ENCODE measurements at regions of chr2 and their contacts with region 1.

Region 1: GRCh38 chr2:188524519-188525113 is 232.9 kb downstream of the GULP1 start:
- DNase-seq: peak; percentile 67
- H3K4me3 Mint-ChIP-seq: no peak overlapping the region
- H3K27ac Mint-ChIP-seq: no peak overlapping the region
- H3K4me1 Mint-ChIP-seq: no peaks in the 10 kb centered on the region
- H3K27me3 Mint-ChIP-seq: peaks cover 2% of the 10 kb centered on the region

Region 2: GRCh38 chr2:188682838-188683237 is 158.2 kb after region 1 on chr2:
- intact Hi-C with region 1: no loop called
- DNase-seq: no peak
- H3K4me3 Mint-ChIP-seq: no peak overlapping the region
- H3K27ac Mint-ChIP-seq: no peak overlapping the region
- H3K4me1 Mint-ChIP-seq: no peaks in the 10 kb centered on the region
- H3K27me3 Mint-ChIP-seq: no peaks in the 10 kb centered on the region

Region 3: GRCh38 chr2:188983427-188984064 is 458.9 kb after region 1 on chr2:
- intact Hi-C with region 1: loop called (anchors 1 kb)
- DNase-seq: no peak
- H3K4me3 Mint-ChIP-seq: no peak overlapping the region
- H3K27ac Mint-ChIP-seq: no peak overlapping the region
- H3K4me1 Mint-ChIP-seq: peaks cover 7% of the 10 kb centered on the region
- H3K27me3 Mint-ChIP-seq: no peaks in the 10 kb centered on the region

Region 4: DNA sequence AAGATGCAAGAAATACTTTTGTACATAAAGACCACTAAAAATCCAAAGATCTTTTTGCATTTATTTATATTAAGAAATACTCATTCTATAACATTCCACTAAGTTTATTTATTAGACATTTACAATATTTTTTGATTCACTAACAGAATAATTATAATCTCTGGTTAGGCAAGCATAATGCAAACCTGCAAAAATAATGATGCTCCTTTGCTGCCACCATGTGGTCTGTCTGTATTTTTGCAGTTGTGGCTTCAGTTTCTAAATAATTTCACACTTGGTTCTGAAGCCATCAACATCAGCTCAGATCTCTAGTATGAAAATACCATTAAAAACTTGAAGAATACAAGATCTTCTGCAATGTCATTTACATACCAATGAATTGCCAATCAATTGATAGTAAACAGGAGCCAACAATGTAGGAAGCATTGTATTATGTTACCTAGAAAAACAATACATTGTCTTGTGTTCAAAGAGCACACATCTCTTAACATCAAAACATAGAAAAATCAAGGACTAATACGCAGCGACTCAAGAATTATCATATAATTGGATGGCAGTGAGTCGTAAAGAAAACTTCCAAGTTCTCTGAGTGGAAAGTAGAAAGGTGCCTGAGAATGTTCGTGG is 887.8 kb after region 1 on chr2:
- intact Hi-C with region 1: loop called (anchors 5 kb)
- DNase-seq: peak; percentile 84
- H3K4me3 Mint-ChIP-seq: no peak overlapping the region
- H3K27ac Mint-ChIP-seq: no peak overlapping the region
- H3K4me1 Mint-ChIP-seq: peaks cover 6% of the 10 kb centered on the region
- H3K27me3 Mint-ChIP-seq: no peaks in the 10 kb centered on the region

Measured in activated CD4-positive, alpha-beta T cell treated with anti-CD3 and anti-CD28 coated beads, Interleukin-2, amount 10 ng/mL, durations not matched to agents 24 days and 14 days (primary cell).